Transverse colon (tissue), 4 donors: ENCODE measurements at regions of chr2 and their contacts with region 1.

Region 1: GRCh38 chr2:97890093-97890492 is 105.7 kb downstream of the TMEM131 start:
- DNase-seq: no peak
- H3K4me3 ChIP-seq: no peak overlapping the region
- H3K27ac ChIP-seq: no peak overlapping the region
- H3K4me1 ChIP-seq: no peaks in the 10 kb centered on the region
- H3K27me3 ChIP-seq: no peaks in the 10 kb centered on the region
- CTCF ChIP-seq: no peak
- EP300 ChIP-seq: no peak
- POLR2A ChIP-seq: no peak

Region 2: DNA sequence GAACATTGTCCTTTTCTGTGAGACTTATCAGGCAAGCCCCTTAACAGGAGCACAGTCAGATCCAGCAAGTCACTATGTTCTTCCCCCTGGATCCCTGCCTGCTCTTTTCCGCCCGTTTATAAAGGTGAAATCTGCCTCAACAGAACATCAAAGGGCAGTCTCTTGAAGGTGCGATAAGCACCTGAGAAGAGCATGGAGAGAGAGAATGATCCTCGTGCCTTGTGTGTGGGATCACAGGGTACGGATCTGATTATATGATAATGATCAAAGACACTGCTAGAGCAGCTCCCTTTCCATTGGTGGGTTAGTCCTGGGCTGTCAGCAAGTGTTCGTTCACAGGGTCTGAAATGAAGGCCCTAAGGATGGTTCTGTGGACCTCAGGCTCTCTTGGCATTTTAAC is 70.3 kb before region 1 on chr2:
- in situ Hi-C with region 1: no loop called
- intact Hi-C with region 1: no loop called
- DNase-seq: no peak
- H3K4me3 ChIP-seq: no peak overlapping the region
- H3K27ac ChIP-seq: no peak overlapping the region
- H3K4me1 ChIP-seq: no peaks in the 10 kb centered on the region
- H3K27me3 ChIP-seq: no peaks in the 10 kb centered on the region
- CTCF ChIP-seq: no peak
- EP300 ChIP-seq: no peak
- POLR2A ChIP-seq: no peak

Region 3: DNA sequence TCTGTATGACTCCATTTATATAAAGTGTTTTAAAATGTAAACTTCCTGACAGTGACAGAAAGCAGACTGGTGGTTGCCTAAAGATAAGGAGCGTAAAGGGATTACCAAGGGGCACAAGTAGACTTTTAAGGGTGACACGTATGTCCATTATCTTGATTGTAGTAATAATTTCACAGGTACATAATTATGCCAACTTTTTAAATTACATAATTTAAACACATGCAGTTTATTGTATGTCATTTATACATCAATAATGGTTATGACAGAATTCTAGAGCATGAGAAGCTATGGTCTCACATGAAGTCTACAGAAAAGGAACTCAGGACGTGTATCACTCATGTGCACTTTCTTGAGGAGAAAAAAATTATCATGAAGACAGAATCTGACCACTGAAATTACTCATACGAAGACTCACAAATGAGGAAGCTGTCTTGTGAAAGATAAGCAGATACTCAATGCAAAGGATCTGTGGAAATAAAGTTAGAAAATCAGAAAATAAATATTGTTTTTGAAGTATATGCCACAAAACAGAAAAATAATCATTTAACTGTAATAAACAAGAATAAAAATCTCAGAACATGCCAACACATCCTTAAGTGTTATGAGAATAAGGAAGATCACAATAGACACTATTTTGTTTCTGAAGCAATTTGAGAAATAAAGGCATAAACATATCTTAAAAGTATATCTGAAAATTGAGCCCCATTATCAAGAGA is 21.3 kb after region 1 on chr2:
- in situ Hi-C with region 1: no loop called
- intact Hi-C with region 1: no loop called
- DNase-seq: no peak
- H3K4me3 ChIP-seq: no peak overlapping the region
- H3K27ac ChIP-seq: peak overlapping the region in 1 of 4 donors; percentile 1
- H3K4me1 ChIP-seq: peaks cover 0 to 24% (median 14%) of the 10 kb centered on the region in 4 donors
- H3K27me3 ChIP-seq: no peaks in the 10 kb centered on the region
- CTCF ChIP-seq: no peak
- EP300 ChIP-seq: no peak
- POLR2A ChIP-seq: no peak

Region 4: DNA sequence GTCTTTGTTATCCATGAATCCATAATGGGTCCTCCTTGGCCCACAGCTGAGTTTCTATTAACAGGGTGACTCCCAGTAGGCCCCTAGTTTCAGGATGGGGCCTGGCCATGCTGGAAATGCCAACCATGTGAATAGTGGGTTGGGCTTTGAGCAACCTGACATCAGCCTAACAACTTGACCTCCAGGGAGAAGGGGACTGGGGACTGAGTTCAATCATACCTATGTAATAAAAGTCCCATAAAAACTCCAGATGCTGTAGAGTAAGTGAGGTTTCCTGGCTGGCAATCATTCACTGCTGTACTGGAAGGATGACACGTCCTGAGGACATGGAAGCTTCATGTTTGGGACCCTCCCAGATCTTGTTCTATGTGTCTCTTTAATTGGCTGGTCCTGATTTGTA is 1591.8 kb after region 1 on chr2:
- in situ Hi-C with region 1: no loop called
- intact Hi-C with region 1: loop called (anchors 5 kb)
- DNase-seq: peak; percentile 28
- H3K4me3 ChIP-seq: no peak overlapping the region
- H3K27ac ChIP-seq: peak overlapping the region in 3 of 4 donors; percentile 42 to 55 (median 42)
- H3K4me1 ChIP-seq: peaks cover 6 to 82% (median 32%) of the 10 kb centered on the region in 4 donors
- H3K27me3 ChIP-seq: no peaks in the 10 kb centered on the region
- CTCF ChIP-seq: no peak
- EP300 ChIP-seq: no peak
- POLR2A ChIP-seq: no peak